GM13977 (cell line): ENCODE measurements at regions of chr20 and their contacts with region 1.

Region 1: DNA sequence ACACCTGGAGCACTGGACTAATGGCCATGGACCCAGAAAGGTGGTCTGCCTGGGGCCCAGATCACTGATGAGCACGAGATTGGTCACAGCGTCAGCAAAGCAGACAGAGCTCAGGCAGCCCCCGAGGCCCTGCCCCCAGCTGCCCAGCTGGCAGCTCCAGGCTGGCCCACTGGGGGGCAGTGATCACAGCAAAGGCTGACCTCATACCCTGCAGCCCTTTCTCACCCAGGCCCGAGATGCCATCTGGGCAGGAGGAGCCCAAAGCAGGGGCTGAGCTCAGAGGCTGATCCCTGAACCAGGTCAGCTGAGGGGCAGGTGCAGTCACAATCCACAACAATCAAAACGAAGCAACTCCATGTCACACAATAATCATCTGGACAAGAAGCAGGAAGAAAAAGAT is 4.1 kb downstream of the MAP1LC3A start:
- DNase-seq: peak; percentile 57
- CTCF ChIP-seq: peak; percentile 53

Region 2: GRCh38 chr20:34468951-34469350 is 93.7 kb before region 1 on chr20:
- in situ Hi-C with region 1: no loop called
- DNase-seq: no peak
- CTCF ChIP-seq: no peak

Region 3: GRCh38 chr20:34922654-34923424 is 360.2 kb after region 1 on chr20:
- in situ Hi-C with region 1: no loop called
- DNase-seq: no peak
- CTCF ChIP-seq: no peak

Region 4: GRCh38 chr20:34938502-34939163 is 376.0 kb after region 1 on chr20:
- in situ Hi-C with region 1: loop called (anchors 10 kb)
- DNase-seq: no peak
- CTCF ChIP-seq: no peak